ENCODE measurements at regions of chr7 and their contacts with region 1.

Region 1: GRCh38 chr7:130409067-130409713 is 28.9 kb downstream of the CPA1 start:
- DNase-seq: no peak
- ATAC-seq: no peak
- H3K4me3 ChIP-seq: no peak overlapping the region
- H3K4me3 Mint-ChIP-seq: no peak overlapping the region
- H3K27ac ChIP-seq: no peak overlapping the region
- H3K27ac Mint-ChIP-seq: no peak overlapping the region
- H3K4me1 ChIP-seq: no peaks in the 10 kb centered on the region
- H3K4me1 Mint-ChIP-seq: no peaks in the 10 kb centered on the region
- H3K27me3 ChIP-seq: no peaks in the 10 kb centered on the region
- H3K27me3 Mint-ChIP-seq: no peaks in the 10 kb centered on the region
- CTCF ChIP-seq: no peak

Region 2: GRCh38 chr7:129903935-129904334 is 505.3 kb before region 1 on chr7:
- intact Hi-C with region 1: no loop called
- DNase-seq: no peak
- ATAC-seq: no peak
- H3K4me3 ChIP-seq: no peak overlapping the region
- H3K4me3 Mint-ChIP-seq: no peak overlapping the region
- H3K27ac ChIP-seq: no peak overlapping the region
- H3K27ac Mint-ChIP-seq: peak overlapping the region in 1 of 2 donors; percentile 58
- H3K4me1 ChIP-seq: peaks cover 15% of the 10 kb centered on the region
- H3K4me1 Mint-ChIP-seq: peaks cover 55 to 64% of the 10 kb centered on the region in 2 donors
- H3K27me3 ChIP-seq: no peaks in the 10 kb centered on the region
- H3K27me3 Mint-ChIP-seq: no peaks in the 10 kb centered on the region
- CTCF ChIP-seq: no peak

Region 3: DNA sequence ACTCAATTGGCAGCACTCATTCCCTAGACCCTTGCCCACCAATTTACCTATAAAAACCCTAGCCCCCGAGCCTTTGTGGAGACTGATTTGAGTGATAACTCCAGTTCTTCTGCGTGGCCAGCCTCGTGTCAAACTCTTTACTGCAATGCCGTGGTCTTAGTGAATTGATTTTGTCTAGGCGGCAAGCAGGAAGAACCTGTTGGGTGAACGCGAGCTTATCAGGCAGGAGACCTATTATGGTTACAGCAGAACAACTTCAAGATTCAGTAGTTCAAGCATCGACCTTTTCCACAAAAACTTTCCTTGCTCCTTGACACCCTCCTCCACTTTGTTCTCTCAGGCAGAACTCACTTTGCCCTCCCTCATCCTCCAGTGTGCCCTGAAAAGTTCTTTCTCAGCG is 189.3 kb before region 1 on chr7:
- intact Hi-C with region 1: no loop called
- DNase-seq: no peak
- ATAC-seq: no peak
- H3K4me3 ChIP-seq: no peak overlapping the region
- H3K4me3 Mint-ChIP-seq: no peak overlapping the region
- H3K27ac ChIP-seq: no peak overlapping the region
- H3K27ac Mint-ChIP-seq: no peak overlapping the region
- H3K4me1 ChIP-seq: no peaks in the 10 kb centered on the region
- H3K4me1 Mint-ChIP-seq: no peaks in the 10 kb centered on the region
- H3K27me3 ChIP-seq: no peaks in the 10 kb centered on the region
- H3K27me3 Mint-ChIP-seq: peaks cover 17 to 18% of the 10 kb centered on the region in 2 donors
- CTCF ChIP-seq: no peak

Region 4: GRCh38 chr7:130356121-130356875 is 52.9 kb before region 1 on chr7:
- intact Hi-C with region 1: loop called (anchors 5 kb)
- DNase-seq: no peak
- ATAC-seq: no peak
- H3K4me3 ChIP-seq: no peak overlapping the region
- H3K4me3 Mint-ChIP-seq: no peak overlapping the region
- H3K27ac ChIP-seq: no peak overlapping the region
- H3K27ac Mint-ChIP-seq: no peak overlapping the region
- H3K4me1 ChIP-seq: no peaks in the 10 kb centered on the region
- H3K4me1 Mint-ChIP-seq: no peaks in the 10 kb centered on the region
- H3K27me3 ChIP-seq: no peaks in the 10 kb centered on the region
- H3K27me3 Mint-ChIP-seq: peaks cover 0 to 4% of the 10 kb centered on the region in 2 donors
- CTCF ChIP-seq: no peak

Region 5: DNA sequence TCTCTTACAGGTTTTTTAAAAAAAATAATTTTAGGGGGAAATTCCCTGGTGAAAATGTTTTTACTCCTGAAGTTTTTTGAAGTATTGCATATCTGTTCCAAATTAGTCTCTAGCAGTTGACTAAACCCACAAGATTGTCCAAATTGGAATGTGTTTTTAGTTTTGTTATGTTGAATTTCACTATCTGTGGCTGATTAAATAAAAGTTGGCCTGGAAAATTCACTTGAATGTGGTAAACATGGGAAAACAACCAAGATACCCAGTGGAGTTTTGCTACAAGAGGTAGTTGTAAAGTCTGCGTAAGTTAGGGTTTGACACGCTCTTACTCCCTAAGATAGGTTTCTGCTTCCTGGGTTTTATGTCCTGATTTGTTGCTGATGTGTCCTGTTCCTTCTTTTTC is 273.8 kb after region 1 on chr7:
- intact Hi-C with region 1: no loop called
- DNase-seq: no peak
- ATAC-seq: no peak
- H3K4me3 ChIP-seq: no peak overlapping the region
- H3K4me3 Mint-ChIP-seq: no peak overlapping the region
- H3K27ac ChIP-seq: no peak overlapping the region
- H3K27ac Mint-ChIP-seq: no peak overlapping the region
- H3K4me1 ChIP-seq: no peaks in the 10 kb centered on the region
- H3K4me1 Mint-ChIP-seq: no peaks in the 10 kb centered on the region
- H3K27me3 ChIP-seq: no peaks in the 10 kb centered on the region
- H3K27me3 Mint-ChIP-seq: peaks cover 11 to 12% of the 10 kb centered on the region in 2 donors
- CTCF ChIP-seq: no peak